ENCODE measurements at regions of chr1 and their contacts with region 1.

Region 1: GRCh38 chr1:39214998-39215873 is 10.7 kb downstream of the MACF1 start:
- DNase-seq: peak in 1 of 2 donors; percentile 68
- ATAC-seq: peak; percentile 79 to 88 (median 87)
- H3K4me3 ChIP-seq: peak overlapping the region; percentile 53
- H3K4me3 Mint-ChIP-seq: peak overlapping the region; percentile 92
- H3K27ac ChIP-seq: peak overlapping the region; percentile 93
- H3K27ac Mint-ChIP-seq: peak overlapping the region; percentile 90 to 96
- H3K4me1 ChIP-seq: peaks cover 34% of the 10 kb centered on the region
- H3K4me1 Mint-ChIP-seq: peaks cover 55 to 56% of the 10 kb centered on the region in 2 donors
- H3K27me3 ChIP-seq: no peaks in the 10 kb centered on the region
- H3K27me3 Mint-ChIP-seq: no peaks in the 10 kb centered on the region
- CTCF ChIP-seq: no peak

Region 2: GRCh38 chr1:39183503-39184353 is 31.5 kb before region 1 on chr1:
- intact Hi-C with region 1: loop called (anchors 5 kb)
- DNase-seq: peak; percentile 53 to 92
- ATAC-seq: peak; percentile 89 to 92 (median 92)
- H3K4me3 ChIP-seq: no peak overlapping the region
- H3K4me3 Mint-ChIP-seq: no peak overlapping the region
- H3K27ac ChIP-seq: peak overlapping the region; percentile 23
- H3K27ac Mint-ChIP-seq: peak overlapping the region; percentile 58 to 90
- H3K4me1 ChIP-seq: peaks cover 9% of the 10 kb centered on the region
- H3K4me1 Mint-ChIP-seq: peaks cover 14% of the 10 kb centered on the region in 2 donors
- H3K27me3 ChIP-seq: no peaks in the 10 kb centered on the region
- H3K27me3 Mint-ChIP-seq: no peaks in the 10 kb centered on the region
- CTCF ChIP-seq: peak; percentile 63

Region 3: DNA sequence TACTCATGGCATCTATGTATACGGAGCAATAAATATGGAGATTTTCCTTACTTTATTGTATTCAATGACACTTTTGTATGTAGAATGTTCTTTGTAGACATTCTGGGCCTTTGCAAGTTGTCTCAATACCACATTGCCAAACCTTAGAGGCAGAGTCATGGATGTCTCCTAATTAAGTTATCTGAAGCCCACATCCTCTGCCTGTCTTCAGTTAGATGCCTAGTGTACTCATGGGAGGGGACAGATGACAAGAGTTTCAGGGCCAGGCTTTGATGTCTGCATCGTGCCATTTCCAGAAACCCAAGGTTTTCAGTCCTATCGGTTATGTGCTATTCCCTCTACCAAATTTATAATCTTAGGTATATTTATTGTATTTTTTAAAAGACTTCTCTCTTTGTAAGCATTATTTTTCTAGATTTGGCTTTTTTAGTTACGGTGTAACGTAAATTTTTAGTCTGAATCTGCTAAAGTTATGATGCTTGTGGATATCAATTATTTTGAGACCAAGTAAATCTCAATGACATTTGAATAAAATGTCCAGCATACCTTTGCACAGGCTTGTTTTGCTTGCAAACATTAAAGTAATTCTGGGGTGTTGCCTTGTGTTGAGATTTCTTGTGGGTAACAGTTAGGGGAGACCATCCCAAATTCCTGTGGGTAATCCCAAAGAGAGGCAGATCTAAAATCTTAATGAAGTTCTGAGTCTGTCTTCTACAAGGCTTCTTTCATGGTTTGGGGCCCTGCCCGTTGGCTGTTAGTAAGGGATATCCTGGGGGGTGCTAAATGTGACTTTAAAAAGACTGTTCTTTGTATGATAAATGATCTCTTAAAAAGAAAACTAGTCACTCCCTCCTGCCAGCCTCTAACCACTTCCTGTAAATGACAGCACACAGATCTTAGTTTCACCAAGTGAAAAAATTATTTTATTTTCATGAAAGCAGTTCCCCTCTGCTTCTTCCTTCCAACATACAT is 18.7 kb before region 1 on chr1:
- intact Hi-C with region 1: loop called (anchors 1 kb)
- DNase-seq: peak; percentile 37 to 87
- ATAC-seq: peak; percentile 64 to 91 (median 86)
- H3K4me3 ChIP-seq: no peak overlapping the region
- H3K4me3 Mint-ChIP-seq: peak overlapping the region; percentile 74
- H3K27ac ChIP-seq: peak overlapping the region; percentile 86
- H3K27ac Mint-ChIP-seq: peak overlapping the region; percentile 91 to 94
- H3K4me1 ChIP-seq: peaks cover 58% of the 10 kb centered on the region
- H3K4me1 Mint-ChIP-seq: peaks cover 61 to 71% of the 10 kb centered on the region in 2 donors
- H3K27me3 ChIP-seq: no peaks in the 10 kb centered on the region
- H3K27me3 Mint-ChIP-seq: no peaks in the 10 kb centered on the region
- CTCF ChIP-seq: no peak

Region 4: GRCh38 chr1:39204441-39205081 is 10.7 kb before region 1 on chr1 and contains the start of gene MACF1:
- intact Hi-C with region 1: loop called (anchors 1 kb)
- DNase-seq: peak; percentile 23 to 59
- ATAC-seq: peak; percentile 40 to 49 (median 42)
- H3K4me3 ChIP-seq: peak within 1 kb of the TSS; percentile 45
- H3K4me3 Mint-ChIP-seq: peak within 1 kb of the TSS; percentile 98
- H3K27ac ChIP-seq: peak within 1 kb of the TSS; percentile 90
- H3K27ac Mint-ChIP-seq: peak within 1 kb of the TSS; percentile 97 to 98
- H3K4me1 ChIP-seq: peaks cover 21% of the 10 kb centered on the region
- H3K4me1 Mint-ChIP-seq: peaks cover 46 to 56% of the 10 kb centered on the region in 2 donors
- H3K27me3 ChIP-seq: no peaks in the 10 kb centered on the region
- H3K27me3 Mint-ChIP-seq: no peaks in the 10 kb centered on the region
- CTCF ChIP-seq: no peak
- total RNA-seq, gene MACF1: 752 to 811 (median 752) TPM

Region 5: DNA sequence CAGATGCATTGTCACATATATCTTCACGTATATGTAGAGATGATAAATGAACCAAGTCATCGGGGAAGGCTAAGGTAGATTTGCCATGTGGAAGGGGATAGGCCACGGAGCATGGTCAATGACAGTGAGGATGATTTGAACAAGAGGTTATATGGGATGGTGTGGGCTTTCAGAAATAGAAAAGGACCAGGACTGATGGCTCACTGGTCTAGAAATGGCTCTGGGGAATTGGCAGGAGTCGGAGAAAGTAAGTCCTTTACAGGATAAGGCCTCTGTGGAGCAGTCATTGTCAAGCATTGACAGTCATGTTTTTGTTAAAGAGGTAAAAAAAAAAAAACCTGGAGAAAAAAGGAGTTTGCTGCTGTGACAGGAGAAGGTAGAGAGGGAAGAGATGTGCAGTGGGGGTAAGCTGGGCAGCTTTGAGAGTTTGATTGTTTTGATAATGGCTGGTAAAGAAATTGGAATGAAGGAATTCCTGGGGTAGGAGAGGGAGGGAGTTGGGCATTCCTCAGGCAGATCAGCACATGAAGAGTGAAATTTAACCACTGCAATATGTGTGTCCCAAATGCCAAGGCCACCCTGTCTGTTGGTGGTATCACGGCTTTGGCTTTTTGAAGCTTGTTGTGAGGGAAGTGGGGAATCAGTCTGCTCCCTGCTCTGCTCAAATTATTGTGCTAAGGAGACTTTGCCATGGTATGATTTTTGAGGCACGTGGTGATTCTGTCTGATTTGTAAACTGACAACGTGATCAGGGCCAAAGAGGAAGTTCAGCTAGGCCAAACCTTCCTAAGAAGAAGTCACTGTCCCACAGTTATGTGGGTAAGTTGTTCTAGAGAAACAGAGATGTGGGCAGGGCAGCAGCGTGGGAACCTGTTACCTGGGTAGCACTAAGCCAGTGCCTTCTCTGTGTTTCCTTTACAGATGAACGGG is 15.3 kb after region 1 on chr1:
- intact Hi-C with region 1: loop called (anchors 2 kb)
- DNase-seq: peak in 1 of 2 donors; percentile 40
- ATAC-seq: peak; percentile 70 to 87 (median 74)
- H3K4me3 ChIP-seq: no peak overlapping the region
- H3K4me3 Mint-ChIP-seq: peak overlapping the region; percentile 21
- H3K27ac ChIP-seq: peak overlapping the region; percentile 26
- H3K27ac Mint-ChIP-seq: peak overlapping the region; percentile 77 to 88
- H3K4me1 ChIP-seq: peaks cover 26% of the 10 kb centered on the region
- H3K4me1 Mint-ChIP-seq: peaks cover 51 to 58% of the 10 kb centered on the region in 2 donors
- H3K27me3 ChIP-seq: no peaks in the 10 kb centered on the region
- H3K27me3 Mint-ChIP-seq: no peaks in the 10 kb centered on the region
- CTCF ChIP-seq: no peak

Region 6: DNA sequence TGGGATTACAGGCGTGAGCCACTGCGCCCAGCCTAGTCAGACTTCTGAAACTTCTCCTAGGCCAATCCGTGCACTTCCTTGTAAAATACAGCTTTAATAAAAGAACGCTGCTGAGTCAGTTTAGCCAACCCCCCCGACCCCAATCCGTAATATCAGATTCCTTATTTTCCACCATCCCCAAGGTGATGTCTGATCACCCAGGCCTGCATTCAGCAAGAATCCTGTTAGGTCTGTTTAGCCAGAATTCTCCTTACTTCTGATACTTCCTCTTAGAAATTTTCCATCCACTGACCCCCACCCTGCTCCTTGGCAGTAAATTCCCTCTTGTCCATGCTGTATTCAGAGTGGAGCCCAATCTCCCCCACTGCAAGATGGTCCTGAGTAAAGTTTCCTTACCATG is 372.9 kb after region 1 on chr1:
- intact Hi-C with region 1: no loop called
- DNase-seq: no peak
- ATAC-seq: no peak
- H3K4me3 ChIP-seq: no peak overlapping the region
- H3K4me3 Mint-ChIP-seq: no peak overlapping the region
- H3K27ac ChIP-seq: no peak overlapping the region
- H3K27ac Mint-ChIP-seq: no peak overlapping the region
- H3K4me1 ChIP-seq: no peaks in the 10 kb centered on the region
- H3K4me1 Mint-ChIP-seq: no peaks in the 10 kb centered on the region
- H3K27me3 ChIP-seq: no peaks in the 10 kb centered on the region
- H3K27me3 Mint-ChIP-seq: peaks cover under 1 to 1% of the 10 kb centered on the region in 2 donors
- CTCF ChIP-seq: no peak